Cardiac septum (tissue), 1 donor: ENCODE measurements at regions of chr10 and their contacts with region 1.

Region 1: GRCh38 chr10:125048101-125048864 is 106.4 kb downstream of the ZRANB1 start:
- DNase-seq: peak; percentile 93

Region 2: DNA sequence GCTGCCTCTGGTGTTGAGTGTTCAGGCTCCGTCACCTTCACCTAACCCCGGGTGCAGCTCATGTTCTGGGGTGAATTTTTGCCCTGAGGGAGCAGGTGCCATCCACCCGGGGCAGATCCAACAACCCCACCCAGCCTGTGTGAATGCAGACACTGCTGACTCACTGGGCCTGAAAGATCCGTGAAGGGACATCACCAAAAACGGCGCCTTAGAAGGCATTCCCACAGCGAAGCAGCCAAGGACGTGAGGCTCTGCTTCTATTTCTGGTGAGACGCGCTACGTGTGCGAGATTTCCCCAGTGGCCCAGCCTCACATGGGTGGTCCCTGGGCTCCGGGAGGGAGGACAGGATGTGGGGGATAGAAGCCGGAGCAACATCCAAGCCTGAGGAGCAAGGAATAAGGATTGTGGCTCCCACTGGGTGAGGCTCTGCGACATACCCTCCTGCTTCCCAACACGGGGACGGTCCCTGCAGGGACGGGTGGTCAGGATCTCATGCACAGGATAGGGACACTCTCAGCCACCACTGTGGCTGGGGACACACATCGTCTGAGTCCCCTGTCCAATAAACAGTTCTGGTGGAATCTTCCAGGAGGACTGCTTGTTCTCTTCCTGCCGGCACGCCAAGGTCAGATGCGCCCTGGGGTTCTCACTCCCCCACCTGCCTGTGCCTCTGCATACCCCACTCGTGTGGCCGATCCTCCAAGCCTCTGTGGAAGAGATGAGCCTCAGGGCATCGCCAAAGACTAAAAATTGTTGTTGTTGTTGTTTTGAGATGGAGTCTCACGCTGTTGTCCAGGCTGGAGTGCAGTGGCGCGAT is 36.2 kb before region 1 on chr10:
- intact Hi-C with region 1: loop called (anchors 5 kb)
- DNase-seq: no peak

Region 3: GRCh38 chr10:125337510-125337909 is 289.2 kb after region 1 on chr10:
- intact Hi-C with region 1: loop called (anchors 10 kb)
- DNase-seq: no peak